ENCODE measurements at regions of chr3 and their contacts with region 1.

Region 1: GRCh38 chr3:57692259-57693147 is at the start of gene DENND6A:
- DNase-seq: peak; percentile 93 to 98
- ATAC-seq: peak; percentile 76 to 90 (median 80)
- H3K4me3 ChIP-seq: peak within 1 kb of the TSS; percentile 60
- H3K4me3 Mint-ChIP-seq: peak within 1 kb of the TSS; percentile 95
- H3K27ac ChIP-seq: peak within 1 kb of the TSS; percentile 88
- H3K27ac Mint-ChIP-seq: peak within 1 kb of the TSS; percentile 94 to 97
- H3K4me1 ChIP-seq: peaks cover 40% of the 10 kb centered on the region
- H3K4me1 Mint-ChIP-seq: peaks cover 22 to 38% of the 10 kb centered on the region in 2 donors
- H3K27me3 ChIP-seq: no peaks in the 10 kb centered on the region
- H3K27me3 Mint-ChIP-seq: no peaks in the 10 kb centered on the region
- CTCF ChIP-seq: no peak
- total RNA-seq, gene DENND6A: 54.5 to 69.8 (median 57.1) TPM

Region 2: GRCh38 chr3:56207922-56208321 is 1484.6 kb before region 1 on chr3:
- intact Hi-C with region 1: no loop called
- DNase-seq: no peak
- ATAC-seq: no peak
- H3K4me3 ChIP-seq: no peak overlapping the region
- H3K4me3 Mint-ChIP-seq: no peak overlapping the region
- H3K27ac ChIP-seq: no peak overlapping the region
- H3K27ac Mint-ChIP-seq: no peak overlapping the region
- H3K4me1 ChIP-seq: no peaks in the 10 kb centered on the region
- H3K4me1 Mint-ChIP-seq: no peaks in the 10 kb centered on the region
- H3K27me3 ChIP-seq: no peaks in the 10 kb centered on the region
- H3K27me3 Mint-ChIP-seq: no peaks in the 10 kb centered on the region
- CTCF ChIP-seq: no peak

Region 3: GRCh38 chr3:57755668-57756527 is 63.4 kb after region 1 on chr3 and contains the start of gene SLMAP:
- intact Hi-C with region 1: loop called (anchors 1 kb)
- DNase-seq: peak; percentile 91 to 98
- ATAC-seq: peak; percentile 92 to 98 (median 93)
- H3K4me3 ChIP-seq: peak within 1 kb of the TSS; percentile 81
- H3K4me3 Mint-ChIP-seq: peak within 1 kb of the TSS; percentile 97
- H3K27ac ChIP-seq: peak within 1 kb of the TSS; percentile 79
- H3K27ac Mint-ChIP-seq: peak within 1 kb of the TSS; percentile 89 to 91
- H3K4me1 ChIP-seq: peaks cover 26% of the 10 kb centered on the region
- H3K4me1 Mint-ChIP-seq: peaks cover 27 to 28% of the 10 kb centered on the region in 2 donors
- H3K27me3 ChIP-seq: no peaks in the 10 kb centered on the region
- H3K27me3 Mint-ChIP-seq: no peaks in the 10 kb centered on the region
- CTCF ChIP-seq: no peak
- total RNA-seq, gene SLMAP: 79.4 to 98.6 (median 89.0) TPM